ENCODE measurements at regions of chr7 and their contacts with region 1.

Region 1: GRCh38 chr7:129644634-129645230 is 33.2 kb downstream of the NRF1 start:
- DNase-seq: peak; percentile 66
- H3K4me3 ChIP-seq: no peak overlapping the region
- H3K27ac ChIP-seq: no peak overlapping the region
- H3K4me1 ChIP-seq: peaks cover 16% of the 10 kb centered on the region
- H3K27me3 ChIP-seq: no peaks in the 10 kb centered on the region
- CTCF ChIP-seq: peak in 1 of 2 donors; percentile 15
- POLR2A ChIP-seq: no peak

Region 2: DNA sequence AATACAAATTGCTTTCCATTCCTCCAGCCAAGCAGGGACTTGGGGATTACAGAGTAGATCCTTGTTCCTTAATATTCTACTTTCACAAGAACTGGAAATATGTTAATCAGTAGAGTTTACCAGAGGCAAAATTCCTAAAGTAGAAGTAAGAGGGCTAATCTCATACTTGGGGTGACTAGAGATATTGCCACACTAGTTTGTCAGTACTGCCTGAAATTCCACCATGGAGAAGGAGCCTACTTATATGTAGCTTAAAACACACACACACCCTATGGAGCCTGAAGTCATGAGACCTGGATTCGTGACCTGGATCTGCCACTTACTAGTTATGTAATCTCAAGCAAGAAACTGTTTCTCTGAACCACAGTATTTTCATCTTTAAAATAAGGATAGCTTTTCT is 176.6 kb before region 1 on chr7:
- CTCF ChIA-PET with region 1: interaction called, 12 read pairs
- POLR2A ChIA-PET with region 1: no interaction called
- dilution Hi-C with region 1: no loop called
- intact Hi-C with region 1: loop called (anchors 2 kb)
- DNase-seq: no peak
- H3K4me3 ChIP-seq: no peak overlapping the region
- H3K27ac ChIP-seq: no peak overlapping the region
- H3K4me1 ChIP-seq: no peaks in the 10 kb centered on the region
- H3K27me3 ChIP-seq: no peaks in the 10 kb centered on the region
- CTCF ChIP-seq: no peak
- POLR2A ChIP-seq: no peak

Region 3: DNA sequence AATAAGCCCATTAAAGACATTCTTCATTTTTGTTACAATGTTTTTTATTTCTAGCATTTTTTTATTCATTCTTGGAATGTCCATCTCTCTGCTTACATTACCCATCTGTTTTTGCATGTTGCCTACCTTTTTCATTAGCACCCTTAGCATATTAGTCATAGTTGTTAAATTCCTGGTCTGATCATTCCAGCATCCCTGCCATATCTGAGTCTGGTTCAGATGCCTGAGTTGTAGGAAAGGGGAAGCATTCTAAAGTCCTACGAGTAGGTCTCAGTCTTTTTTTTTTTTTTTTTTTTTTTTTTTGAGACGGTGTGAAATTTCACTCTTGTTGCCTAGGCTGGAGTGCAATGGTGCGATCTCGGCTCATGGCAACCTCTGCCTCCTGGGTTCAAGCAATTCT is 52.9 kb before region 1 on chr7:
- CTCF ChIA-PET with region 1: interaction called, 14 read pairs
- POLR2A ChIA-PET with region 1: no interaction called
- dilution Hi-C with region 1: no loop called
- intact Hi-C with region 1: no loop called
- DNase-seq: no peak
- H3K4me3 ChIP-seq: no peak overlapping the region
- H3K27ac ChIP-seq: no peak overlapping the region
- H3K4me1 ChIP-seq: no peaks in the 10 kb centered on the region
- H3K27me3 ChIP-seq: peaks cover 1 to 2% of the 10 kb centered on the region in 2 experiments
- CTCF ChIP-seq: no peak
- POLR2A ChIP-seq: no peak

Region 4: GRCh38 chr7:129630341-129630740 is 14.4 kb before region 1 on chr7:
- CTCF ChIA-PET with region 1: interaction called, 11 read pairs
- POLR2A ChIA-PET with region 1: no interaction called
- dilution Hi-C with region 1: no loop called
- intact Hi-C with region 1: no loop called
- DNase-seq: peak; percentile 19
- H3K4me3 ChIP-seq: no peak overlapping the region
- H3K27ac ChIP-seq: no peak overlapping the region
- H3K4me1 ChIP-seq: no peaks in the 10 kb centered on the region
- H3K27me3 ChIP-seq: no peaks in the 10 kb centered on the region
- CTCF ChIP-seq: no peak
- POLR2A ChIP-seq: no peak

Region 5: GRCh38 chr7:129825496-129826267 is 180.9 kb after region 1 on chr7:
- CTCF ChIA-PET with region 1: interaction called, 16 read pairs
- POLR2A ChIA-PET with region 1: no interaction called
- dilution Hi-C with region 1: no loop called
- intact Hi-C with region 1: no loop called
- DNase-seq: peak; percentile 73
- H3K4me3 ChIP-seq: peak overlapping the region; percentile 53 to 75 (median 71)
- H3K27ac ChIP-seq: peak overlapping the region; percentile 59
- H3K4me1 ChIP-seq: peaks cover 8% of the 10 kb centered on the region
- H3K27me3 ChIP-seq: no peaks in the 10 kb centered on the region
- CTCF ChIP-seq: peak in 1 of 2 donors; percentile 72
- POLR2A ChIP-seq: no peak